ENCODE measurements at regions of chr1 and their contacts with region 1.

Region 1: GRCh38 chr1:99808391-99809115 is 41.6 kb upstream of the AGL start:
- DNase-seq: peak; percentile 38 to 40
- ATAC-seq: peak; percentile 97 to 99
- H3K4me3 ChIP-seq: peak overlapping the region; percentile 19 to 47 (median 25)
- H3K27ac ChIP-seq: peak overlapping the region; percentile 10 to 77 (median 68)
- H3K4me1 ChIP-seq: peaks cover 9 to 10% of the 10 kb centered on the region in 2 donors
- H3K27me3 ChIP-seq: no peaks in the 10 kb centered on the region
- CTCF ChIP-seq: peak; percentile 55 to 71 (median 66)
- POLR2A ChIP-seq: no peak

Region 2: GRCh38 chr1:99855914-99856450 is 47.4 kb after region 1 on chr1:
- in situ Hi-C with region 1: loop called in 1 of 4 experiments (anchors 5 kb)
- intact Hi-C with region 1: loop called (anchors 2 kb)
- DNase-seq: no peak
- ATAC-seq: peak; percentile 96 to 97
- H3K4me3 ChIP-seq: no peak overlapping the region
- H3K27ac ChIP-seq: peak overlapping the region; percentile 94 to 95 (median 94)
- H3K4me1 ChIP-seq: peaks cover 44 to 50% of the 10 kb centered on the region in 2 donors
- H3K27me3 ChIP-seq: no peaks in the 10 kb centered on the region
- CTCF ChIP-seq: no peak
- POLR2A ChIP-seq: no peak

Region 3: GRCh38 chr1:100037927-100038659 is 229.5 kb after region 1 on chr1:
- in situ Hi-C with region 1: loop called in 2 of 4 experiments (anchors 25 kb)
- intact Hi-C with region 1: loop called (anchors 2 kb)
- DNase-seq: peak; percentile 81 to 85
- ATAC-seq: peak; percentile 91 to 93
- H3K4me3 ChIP-seq: peak overlapping the region; percentile 86 to 90 (median 88)
- H3K27ac ChIP-seq: peak overlapping the region; percentile 93 to 96 (median 96)
- H3K4me1 ChIP-seq: peaks cover 24 to 33% of the 10 kb centered on the region in 2 donors
- H3K27me3 ChIP-seq: no peaks in the 10 kb centered on the region
- CTCF ChIP-seq: no peak
- POLR2A ChIP-seq: peak; percentile 94 to 95

Region 4: DNA sequence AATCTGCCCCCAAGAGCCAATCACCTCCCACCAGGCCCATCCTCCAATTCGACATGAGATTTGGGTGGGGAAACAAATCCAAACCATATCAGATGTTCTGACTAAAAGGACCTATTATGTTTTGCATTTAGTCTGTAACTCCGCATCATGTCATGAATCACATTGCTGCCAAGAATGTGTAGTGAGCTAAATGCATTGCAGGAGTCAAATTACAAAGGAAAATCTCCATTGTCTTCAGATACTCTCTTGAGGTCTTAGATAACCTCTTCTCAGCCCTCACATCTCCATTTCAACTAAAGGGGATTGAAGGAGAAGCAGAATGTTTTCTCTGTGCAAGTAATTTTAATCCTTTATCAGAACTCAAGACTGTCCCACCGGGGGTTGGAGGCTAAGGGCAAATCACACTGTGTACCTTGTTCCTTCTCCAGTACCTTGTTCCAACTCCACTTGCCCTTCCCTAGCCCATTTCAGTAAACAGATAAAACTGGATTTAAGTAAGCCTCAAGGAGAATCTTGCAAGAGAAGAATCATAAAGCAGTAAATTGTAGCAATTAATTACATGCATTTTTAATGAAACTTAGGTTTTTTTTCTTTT is 1051.9 kb after region 1 on chr1:
- in situ Hi-C with region 1: loop called in 2 of 4 experiments (anchors 10 to 25 kb)
- intact Hi-C with region 1: loop called (anchors 5 kb)
- DNase-seq: no peak
- ATAC-seq: no peak
- H3K4me3 ChIP-seq: no peak overlapping the region
- H3K27ac ChIP-seq: no peak overlapping the region
- H3K4me1 ChIP-seq: no peaks in the 10 kb centered on the region
- H3K27me3 ChIP-seq: no peaks in the 10 kb centered on the region
- CTCF ChIP-seq: no peak
- POLR2A ChIP-seq: no peak